Right cardiac atrium (tissue), 5 donors: ENCODE measurements at regions of chr1 and their contacts with region 1.

Region 1: GRCh38 chr1:168719306-168720111 is 9.5 kb downstream of the DPT start:
- DNase-seq: no peak
- ATAC-seq: no peak
- H3K4me3 ChIP-seq: no peak overlapping the region
- H3K27ac ChIP-seq: no peak overlapping the region
- H3K4me1 ChIP-seq: peaks cover 1% of the 10 kb centered on the region
- H3K27me3 ChIP-seq: no peaks in the 10 kb centered on the region

Region 2: GRCh38 chr1:168907053-168907452 is 187.5 kb after region 1 on chr1:
- intact Hi-C with region 1: no loop called
- DNase-seq: no peak
- ATAC-seq: no peak
- H3K4me3 ChIP-seq: no peak overlapping the region
- H3K27ac ChIP-seq: no peak overlapping the region
- H3K4me1 ChIP-seq: no peaks in the 10 kb centered on the region
- H3K27me3 ChIP-seq: no peaks in the 10 kb centered on the region

Region 3: DNA sequence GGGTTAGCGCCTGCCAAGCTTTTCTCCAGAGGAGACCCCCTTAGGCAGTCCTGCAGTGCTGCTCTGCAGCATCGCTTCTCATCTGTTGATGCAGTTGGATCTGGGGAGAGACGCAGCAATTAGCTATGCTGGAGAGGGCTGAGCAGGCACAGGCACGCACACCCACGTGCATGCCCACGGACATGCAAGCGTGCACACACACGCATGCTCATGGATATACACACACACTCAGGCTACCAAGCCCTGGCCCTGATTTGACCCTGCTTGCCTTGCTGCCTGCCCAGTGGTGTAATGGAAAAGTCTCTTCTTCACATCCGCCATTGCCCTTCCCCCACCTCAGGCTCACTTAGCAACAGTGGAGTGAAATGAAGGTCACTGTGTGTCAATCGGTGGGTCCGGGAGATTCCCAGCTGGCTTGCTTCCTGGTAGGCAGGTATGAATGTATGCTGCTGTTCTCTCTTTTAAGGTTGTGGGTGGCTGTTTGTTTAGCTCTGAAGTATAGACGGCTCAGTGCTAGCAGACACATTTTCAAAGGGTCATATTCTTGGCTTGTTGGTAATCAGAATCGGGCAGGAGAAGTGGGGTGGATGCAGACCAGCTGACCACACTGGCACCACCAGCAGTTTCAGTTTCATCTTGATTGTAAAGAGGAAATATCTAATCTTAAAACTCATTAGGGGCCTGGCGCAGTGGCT is 396.5 kb after region 1 on chr1:
- intact Hi-C with region 1: loop called in 1 of 4 experiments (anchors 10 kb)
- DNase-seq: peak; percentile 47 to 77 (median 73)
- ATAC-seq: peak; percentile 57 to 75
- H3K4me3 ChIP-seq: no peak overlapping the region
- H3K27ac ChIP-seq: peak overlapping the region; percentile 77
- H3K4me1 ChIP-seq: peaks cover 8% of the 10 kb centered on the region
- H3K27me3 ChIP-seq: no peaks in the 10 kb centered on the region